HAP-1 (cell line): ENCODE measurements at regions of chr5 and their contacts with region 1.

Region 1: GRCh38 chr5:74919487-74919886 is 53.3 kb upstream of the FAM169A start:
- DNase-seq: peak in 1 of 2 experiments; percentile 70
- H3K4me3 ChIP-seq: no peak overlapping the region
- H3K4me1 ChIP-seq: peaks cover 4% of the 10 kb centered on the region; the same call in 1 of the 2 replicates
- H3K27me3 ChIP-seq: no peaks in the 10 kb centered on the region

Region 2: DNA sequence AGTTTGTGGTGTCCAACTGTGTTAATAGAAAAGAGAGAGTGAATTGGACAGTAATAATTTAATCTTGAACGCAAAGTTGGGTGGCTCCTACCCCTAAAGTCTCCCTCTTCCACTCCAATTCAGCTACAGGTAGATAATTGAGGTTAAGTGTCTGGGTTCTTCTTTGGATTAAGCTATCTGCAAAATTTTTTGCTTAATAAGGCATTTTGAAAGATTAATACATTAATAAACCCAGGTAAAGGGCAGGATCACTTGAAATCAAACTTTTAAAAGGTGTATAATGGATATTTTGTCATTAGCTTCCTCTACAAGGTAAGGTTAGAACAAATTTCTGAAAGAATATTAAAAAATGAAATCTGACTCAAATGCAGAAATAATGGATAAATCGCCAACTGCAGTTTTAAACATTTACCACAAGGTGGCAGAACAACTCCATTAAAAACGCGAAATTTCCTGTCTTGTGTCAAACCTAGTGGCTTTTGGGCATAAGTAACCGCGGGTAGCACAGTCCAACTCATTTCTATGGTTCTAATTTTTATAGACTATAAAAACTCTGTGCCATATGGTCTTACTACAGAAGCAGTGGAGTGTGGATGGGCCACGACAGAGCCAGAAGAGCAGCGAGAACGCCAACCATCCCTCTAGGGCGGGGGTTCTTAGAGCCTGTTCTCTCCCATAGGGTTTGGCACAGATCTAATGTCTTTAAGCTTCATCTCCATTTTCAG is 1017.0 kb before region 1 on chr5:
- in situ Hi-C with region 1: loop called (anchors 25 kb)
- DNase-seq: peak; percentile 26 to 40
- H3K4me3 ChIP-seq: no peak overlapping the region
- H3K4me1 ChIP-seq: no peaks in the 10 kb centered on the region
- H3K27me3 ChIP-seq: peaks cover 29% of the 10 kb centered on the region

Region 3: GRCh38 chr5:74035521-74035981 is 883.9 kb before region 1 on chr5:
- in situ Hi-C with region 1: loop called (anchors 10 kb)
- DNase-seq: peak in 1 of 2 experiments; percentile 14
- H3K4me3 ChIP-seq: no peak overlapping the region
- H3K4me1 ChIP-seq: peaks cover 15% of the 10 kb centered on the region
- H3K27me3 ChIP-seq: peaks cover 44% of the 10 kb centered on the region

Region 4: GRCh38 chr5:74673011-74673790 is 246.3 kb before region 1 on chr5:
- in situ Hi-C with region 1: loop called (anchors 5 kb)
- DNase-seq: peak in 1 of 2 experiments; percentile 33
- H3K4me3 ChIP-seq: no peak overlapping the region
- H3K4me1 ChIP-seq: no peaks in the 10 kb centered on the region
- H3K27me3 ChIP-seq: 0 out of 2 replicates have a peak, but pooled peaks cover 4% of the 10 kb centered on the region

Region 5: GRCh38 chr5:74766849-74767578 is 152.5 kb before region 1 on chr5 and contains the starts of genes GFM2 and NSA2:
- in situ Hi-C with region 1: loop called (anchors 10 kb)
- DNase-seq: peak; percentile 74 to 93
- H3K4me3 ChIP-seq: peak within 1 kb of the TSS; percentile 85
- H3K4me1 ChIP-seq: peaks cover 17% of the 10 kb centered on the region
- H3K27me3 ChIP-seq: no peaks in the 10 kb centered on the region

Region 6: DNA sequence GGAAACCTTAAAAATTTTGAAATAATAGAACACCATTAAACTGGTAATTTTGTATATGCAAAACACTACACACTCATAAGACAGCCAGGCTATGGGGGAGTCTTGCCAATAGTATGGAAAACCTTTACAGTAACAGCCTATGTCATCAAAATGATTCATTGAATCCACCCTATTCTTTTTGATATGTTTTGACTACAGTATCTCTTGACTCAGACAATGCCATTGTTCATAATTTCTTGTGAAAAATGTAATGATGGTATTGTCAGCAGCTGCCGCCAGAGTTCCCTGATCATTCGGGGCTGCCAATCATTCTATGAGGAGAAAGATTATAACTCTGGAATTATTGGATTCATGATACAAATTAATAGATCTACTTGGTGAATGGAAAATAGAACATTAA is 899.2 kb after region 1 on chr5:
- in situ Hi-C with region 1: no loop called
- DNase-seq: no peak
- H3K4me3 ChIP-seq: no peak overlapping the region
- H3K4me1 ChIP-seq: no peaks in the 10 kb centered on the region
- H3K27me3 ChIP-seq: no peaks in the 10 kb centered on the region